PC-9 (cell line): ENCODE measurements at regions of chr1 and their contacts with region 1.

Region 1: DNA sequence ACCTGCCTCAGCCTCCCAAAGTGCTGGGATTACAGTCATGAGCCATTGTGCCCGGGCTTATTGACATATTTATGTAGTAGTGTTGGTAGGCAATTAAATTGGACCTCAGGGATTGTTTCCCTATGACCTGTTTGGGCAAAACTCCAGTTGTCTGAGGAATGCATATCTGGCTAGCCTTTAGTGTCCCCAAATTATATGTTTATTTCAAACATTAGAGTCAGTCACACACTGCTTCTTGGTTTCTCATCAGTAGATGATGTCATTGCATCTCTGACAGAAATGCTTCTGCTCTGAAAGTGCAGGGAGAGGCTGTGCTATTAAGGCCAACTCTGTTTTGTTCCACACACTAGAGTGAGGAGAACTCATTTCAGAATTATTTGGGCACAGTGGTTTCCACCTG is 12.5 kb downstream of the PIP5K1A start:
- DNase-seq: no peak
- H3K4me3 ChIP-seq: no peak overlapping the region
- H3K27ac ChIP-seq: no peak overlapping the region
- H3K4me1 ChIP-seq: no peaks in the 10 kb centered on the region
- H3K27me3 ChIP-seq: no peaks in the 10 kb centered on the region
- CTCF ChIP-seq: no peak

Region 2: DNA sequence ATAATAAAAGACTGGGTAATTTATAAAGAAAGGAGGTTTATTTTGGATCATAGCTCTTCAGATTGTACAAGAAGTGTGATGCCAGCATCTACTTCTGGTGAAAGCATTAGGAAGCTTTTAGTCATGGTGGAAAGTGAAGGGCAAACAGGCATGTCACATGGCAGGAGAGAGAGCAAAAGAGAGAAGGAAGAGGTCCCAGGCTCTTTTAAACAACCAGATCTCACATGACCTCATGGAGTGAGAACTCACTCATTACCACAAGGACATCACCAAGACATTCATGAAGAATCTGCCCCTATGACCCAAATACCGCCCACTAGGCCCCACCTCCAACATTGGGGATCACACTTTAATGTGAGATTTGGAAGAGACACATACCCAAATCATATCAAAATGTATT is 938.2 kb after region 1 on chr1:
- CTCF ChIA-PET with region 1: no interaction called
- POLR2A ChIA-PET with region 1: interaction called, 13 read pairs
- intact Hi-C with region 1: no loop called
- DNase-seq: no peak
- H3K4me3 ChIP-seq: no peak overlapping the region
- H3K27ac ChIP-seq: no peak overlapping the region
- H3K4me1 ChIP-seq: no peaks in the 10 kb centered on the region
- H3K27me3 ChIP-seq: no peaks in the 10 kb centered on the region
- CTCF ChIP-seq: no peak